Right cardiac atrium (tissue), 5 donors: ENCODE measurements at regions of chr1 and their contacts with region 1.

Region 1: DNA sequence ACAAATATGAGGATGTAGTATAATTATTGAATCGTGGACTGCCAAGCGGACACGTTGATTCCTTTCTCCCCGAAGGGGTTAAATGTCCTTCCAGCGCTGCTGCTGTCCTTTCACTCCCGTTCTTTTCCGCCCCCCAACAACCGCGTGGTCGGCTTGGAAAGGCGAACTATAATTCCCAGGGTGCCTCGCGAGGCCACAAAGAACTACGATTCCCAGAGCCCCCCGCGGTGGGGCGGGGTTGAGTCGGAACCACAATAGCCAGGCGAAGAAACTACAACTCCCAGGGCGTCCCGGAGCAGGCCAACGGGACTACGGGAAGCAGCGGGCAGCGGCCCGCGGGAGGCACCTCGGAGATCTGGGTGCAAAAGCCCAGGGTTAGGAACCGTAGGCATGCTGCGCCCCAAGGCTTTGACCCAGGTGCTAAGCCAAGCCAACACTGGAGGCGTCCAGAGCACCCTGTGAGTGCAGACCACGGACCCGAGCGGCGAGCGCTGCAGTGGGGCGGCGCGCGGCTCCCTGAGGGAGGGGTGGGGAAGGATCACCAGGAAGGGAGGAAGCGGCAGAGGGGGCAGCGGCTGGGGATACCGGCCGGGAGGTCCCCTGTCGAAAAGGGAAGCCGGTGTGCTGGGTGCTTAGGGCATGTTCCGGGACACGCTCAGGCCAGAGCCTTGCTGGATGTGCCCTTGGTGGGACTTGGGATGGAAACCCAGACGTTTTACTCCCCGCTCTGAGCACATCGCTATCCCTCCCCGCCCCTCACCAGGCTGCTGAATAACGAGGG is at the start of gene LAMTOR2:
- DNase-seq: peak; percentile 99 to 100 (median 99)
- ATAC-seq: peak; percentile 92 to 94
- H3K4me3 ChIP-seq: peak within 1 kb of the TSS; percentile 64
- H3K27ac ChIP-seq: peak within 1 kb of the TSS; percentile 99
- H3K4me1 ChIP-seq: no peaks in the 10 kb centered on the region
- H3K27me3 ChIP-seq: no peaks in the 10 kb centered on the region
- total RNA-seq, gene LAMTOR2: 43.8 to 55.2 (median 51.5) TPM

Region 2: GRCh38 chr1:156001682-156002171 is 53.0 kb before region 1 on chr1:
- intact Hi-C with region 1: loop called in 1 of 4 experiments (anchors 10 kb)
- DNase-seq: no peak
- ATAC-seq: peak; percentile 36 to 65
- H3K4me3 ChIP-seq: no peak overlapping the region
- H3K27ac ChIP-seq: no peak overlapping the region
- H3K4me1 ChIP-seq: no peaks in the 10 kb centered on the region
- H3K27me3 ChIP-seq: no peaks in the 10 kb centered on the region